PC-3 (cell line): ENCODE measurements at regions of chr3 and their contacts with region 1.

Region 1: DNA sequence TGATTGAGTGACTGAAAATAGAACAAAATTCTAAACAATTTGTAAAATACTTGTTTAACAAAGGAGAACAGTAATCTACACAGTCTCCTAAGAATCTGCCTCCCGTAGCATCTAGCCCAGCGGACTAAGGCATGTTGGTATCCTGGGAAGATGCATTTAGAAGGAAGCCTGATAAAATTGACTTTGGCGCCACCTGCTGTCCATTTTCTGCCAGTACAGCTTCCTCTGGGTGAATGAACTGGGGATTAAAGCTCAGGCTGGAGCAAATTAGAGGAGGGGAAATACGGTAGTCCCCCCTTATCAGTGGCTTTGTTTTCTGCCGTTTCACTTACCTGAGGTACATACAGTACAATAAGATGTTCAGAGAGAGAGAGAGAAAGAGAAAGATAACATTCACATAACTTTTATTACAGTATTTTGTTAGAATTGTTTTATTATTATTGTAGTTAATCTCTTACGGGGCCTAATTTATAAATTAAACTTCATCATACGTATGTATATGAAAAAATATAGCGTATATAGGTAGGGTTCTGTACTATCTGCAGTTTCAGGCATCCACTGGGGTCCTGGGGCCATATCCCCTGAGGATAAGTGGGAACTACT is 191.6 kb downstream of the GAP43 start:
- DNase-seq: peak; percentile 94
- ATAC-seq: peak; percentile 89
- H3K4me3 ChIP-seq: no peak overlapping the region
- H3K27ac ChIP-seq: no peak overlapping the region
- H3K4me1 ChIP-seq: peaks cover 8% of the 10 kb centered on the region; the same call in 1 of the 2 replicates
- H3K27me3 ChIP-seq: no peaks in the 10 kb centered on the region
- CTCF ChIP-seq: peak; percentile 97

Region 2: GRCh38 chr3:115436767-115437301 is 378.0 kb before region 1 on chr3:
- CTCF ChIA-PET with region 1: no interaction called
- POLR2A ChIA-PET with region 1: no interaction called
- intact Hi-C with region 1: loop called (anchors 5 kb)
- DNase-seq: peak; percentile 80
- ATAC-seq: peak; percentile 80
- H3K4me3 ChIP-seq: no peak overlapping the region
- H3K27ac ChIP-seq: peak overlapping the region; percentile 39; the same call in 1 of the 2 replicates
- H3K4me1 ChIP-seq: peaks cover 5% of the 10 kb centered on the region
- H3K27me3 ChIP-seq: no peaks in the 10 kb centered on the region
- CTCF ChIP-seq: peak; percentile 55